Cardiac septum (tissue), 1 donor: ENCODE measurements at regions of chr7 and their contacts with region 1.

Region 1: GRCh38 chr7:143008007-143008901 is 18.7 kb downstream of the OR9A2 start:
- DNase-seq: peak; percentile 88

Region 2: GRCh38 chr7:142889816-142890215 is 118.4 kb before region 1 on chr7:
- intact Hi-C with region 1: no loop called
- DNase-seq: peak; percentile 43

Region 3: GRCh38 chr7:143214789-143215679 is 206.8 kb after region 1 on chr7:
- intact Hi-C with region 1: loop called (anchors 1 kb)
- DNase-seq: no peak